ENCODE measurements at regions of chr1 and their contacts with region 1.

Region 1: DNA sequence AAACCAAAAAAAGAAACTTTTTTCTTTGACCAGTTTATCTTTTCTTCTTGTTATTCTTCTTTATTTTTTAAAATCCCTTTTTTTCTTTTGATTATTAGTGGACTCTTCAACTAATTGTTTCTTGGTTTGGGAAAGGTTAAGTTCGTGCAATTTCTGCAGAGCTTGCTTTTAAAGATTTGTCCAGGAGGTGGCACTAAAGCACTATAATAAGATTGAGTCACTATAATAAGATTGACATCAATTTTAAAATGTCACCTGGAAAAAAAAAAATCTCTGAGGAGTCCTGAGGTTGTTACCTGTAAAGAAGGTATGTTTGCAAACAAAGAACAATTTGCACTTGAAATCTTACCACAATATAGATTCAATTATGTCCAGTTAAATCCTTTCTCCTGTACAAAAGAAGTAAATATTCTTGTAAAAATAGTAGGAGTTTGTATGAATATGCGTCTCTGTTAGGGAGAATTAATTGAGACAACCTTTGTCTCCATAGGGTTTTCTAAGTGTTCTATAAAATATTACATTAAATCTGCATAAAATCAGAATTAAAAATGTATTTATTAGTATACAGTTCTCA is 166.7 kb downstream of the ADGRL4 start:
- DNase-seq: peak in 6 of 7 donors; percentile 9 to 57 (median 29)
- H3K4me3 ChIP-seq: no peak overlapping the region
- H3K27ac ChIP-seq: no peak overlapping the region
- H3K4me1 ChIP-seq: no peaks in the 10 kb centered on the region
- H3K27me3 ChIP-seq: no peaks in the 10 kb centered on the region
- CTCF ChIP-seq: peak; percentile 30 to 72 (median 55)
- POLR2A ChIP-seq: no peak

Region 2: DNA sequence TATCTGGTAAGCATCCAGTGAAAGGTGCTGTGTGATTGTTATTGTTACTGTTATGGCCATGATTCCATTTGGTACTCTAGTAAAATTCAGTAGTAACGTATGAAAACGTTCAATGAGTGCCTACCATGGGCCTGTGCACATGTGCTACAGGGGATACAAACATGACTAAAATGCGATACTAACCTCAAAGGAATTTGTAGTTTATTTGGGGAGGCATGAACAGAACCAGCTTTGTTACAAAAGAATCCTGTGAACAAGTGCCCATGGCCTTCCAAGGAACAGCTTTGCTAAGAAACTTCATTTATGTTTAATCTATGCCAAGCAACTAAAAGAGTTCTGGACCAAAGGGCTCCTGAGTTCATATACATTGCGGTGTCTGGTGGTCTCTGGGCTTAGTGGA is 320.3 kb before region 1 on chr1:
- intact Hi-C with region 1: no loop called
- DNase-seq: no peak
- H3K4me3 ChIP-seq: no peak overlapping the region
- H3K27ac ChIP-seq: no peak overlapping the region
- H3K4me1 ChIP-seq: no peaks in the 10 kb centered on the region
- H3K27me3 ChIP-seq: no peaks in the 10 kb centered on the region
- CTCF ChIP-seq: no peak
- POLR2A ChIP-seq: no peak

Region 3: DNA sequence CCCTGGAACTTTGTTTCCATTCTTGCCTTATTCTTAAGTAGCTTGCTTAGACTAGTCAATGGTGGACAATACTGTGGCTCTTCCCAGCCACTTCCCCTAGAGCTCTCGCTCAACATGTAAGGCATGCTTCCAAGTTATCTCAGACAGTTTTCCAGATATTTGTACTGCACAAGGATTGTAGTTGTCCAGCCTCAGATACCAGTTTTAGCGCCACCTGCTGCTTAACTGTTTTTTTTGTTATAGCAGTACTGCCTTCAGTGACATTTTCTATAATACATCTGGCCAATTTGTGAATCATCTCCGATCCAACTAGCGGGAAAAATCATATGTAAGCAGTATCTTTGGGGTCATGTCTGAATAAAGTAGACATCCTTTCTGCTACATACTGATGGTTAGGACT is 513.4 kb after region 1 on chr1:
- intact Hi-C with region 1: loop called in 1 of 2 experiments (anchors 5 kb)
- DNase-seq: peak; percentile 23 to 59 (median 36)
- H3K4me3 ChIP-seq: no peak overlapping the region
- H3K27ac ChIP-seq: no peak overlapping the region
- H3K4me1 ChIP-seq: no peaks in the 10 kb centered on the region
- H3K27me3 ChIP-seq: no peaks in the 10 kb centered on the region
- CTCF ChIP-seq: peak; percentile 16 to 47 (median 43)
- POLR2A ChIP-seq: no peak